Sciatic nerve (tissue), 2 donors: ENCODE measurements at regions of chr1 and their contacts with region 1.

Region 1: DNA sequence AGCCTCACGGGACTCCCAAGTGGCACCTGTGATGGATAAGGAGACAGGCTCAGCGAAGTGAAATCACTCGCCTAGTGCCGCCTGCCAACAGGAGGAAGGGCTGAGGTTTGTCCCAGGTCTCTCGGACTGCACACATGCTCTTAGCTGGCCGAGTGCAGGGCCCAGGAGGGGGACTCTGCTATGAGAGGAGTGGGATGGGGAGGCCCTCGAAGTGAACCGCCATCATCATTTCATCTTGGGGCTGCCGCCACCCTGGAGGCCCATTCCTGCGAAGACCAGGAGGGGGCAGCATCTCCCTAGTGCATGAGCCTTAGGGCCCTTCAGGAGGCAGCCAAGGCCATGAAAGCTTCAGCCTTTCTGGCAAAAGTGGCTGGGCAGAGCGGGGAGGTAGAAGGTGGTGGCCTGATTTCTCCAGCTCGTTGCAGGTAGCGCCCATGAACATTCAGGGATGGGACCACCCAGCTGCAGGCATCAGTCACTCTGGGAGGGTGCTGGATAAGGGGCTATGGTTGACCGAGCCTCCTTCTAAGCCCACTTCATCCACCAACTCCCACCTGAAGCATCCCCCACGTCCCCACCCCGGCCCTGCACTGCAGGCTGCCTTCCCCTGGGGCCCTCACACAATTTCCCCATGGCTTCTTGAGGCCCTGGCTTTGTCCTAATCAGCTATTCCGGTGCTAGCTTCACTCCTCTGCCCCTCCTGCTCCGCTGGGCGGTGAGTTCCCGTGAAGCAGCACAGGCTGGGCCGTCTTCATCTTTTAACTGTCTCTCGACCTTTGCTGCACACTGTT is 17.2 kb upstream of the RASSF5 start:
- DNase-seq: peak; percentile 90
- ATAC-seq: peak; percentile 88

Region 2: GRCh38 chr1:206589206-206589605 is 99.0 kb after region 1 on chr1:
- intact Hi-C with region 1: loop called (anchors 5 kb)
- DNase-seq: no peak
- ATAC-seq: peak; percentile 41